PC-3 (cell line): ENCODE measurements at regions of chr3 and their contacts with region 1.

Region 1: DNA sequence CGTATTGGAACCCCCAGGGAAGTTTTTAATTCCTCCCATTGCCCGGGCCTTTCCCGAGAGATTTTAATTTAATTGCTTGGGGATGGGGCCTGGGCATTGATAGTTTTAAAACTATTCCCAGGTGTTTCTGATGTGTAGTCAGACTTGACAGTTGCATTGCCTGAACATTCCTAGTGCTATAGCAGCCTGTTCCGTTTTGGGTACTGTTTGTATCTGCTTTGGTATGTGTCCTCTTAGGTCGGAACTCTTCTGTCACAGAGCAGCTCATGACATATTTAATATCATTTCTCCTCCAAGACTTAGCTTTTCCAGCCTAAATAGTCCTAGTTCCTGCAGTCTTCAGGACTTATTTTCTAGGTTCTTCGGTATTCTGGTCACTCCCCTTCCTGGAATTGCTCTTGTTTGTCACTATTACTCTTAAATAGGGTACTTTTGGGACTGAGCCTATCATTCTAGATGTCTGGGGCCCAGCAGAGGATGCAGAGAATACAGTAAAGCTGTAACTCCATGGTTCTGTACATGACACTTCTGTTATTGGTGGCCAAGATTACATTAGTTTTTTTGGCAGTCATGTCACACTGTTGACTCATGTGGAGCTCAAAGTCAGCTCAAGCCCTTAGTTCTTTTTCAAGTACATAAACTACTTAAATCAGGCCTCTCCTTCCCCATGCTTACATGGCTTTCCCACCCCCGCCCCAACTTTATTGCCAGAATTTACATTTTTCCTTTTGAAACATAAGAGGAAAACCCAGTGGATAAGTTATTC is 81.5 kb downstream of the BBX start:
- DNase-seq: no peak
- ATAC-seq: peak; percentile 70
- H3K4me3 ChIP-seq: no peak overlapping the region
- H3K27ac ChIP-seq: no peak overlapping the region
- H3K4me1 ChIP-seq: peaks cover 7% of the 10 kb centered on the region
- H3K27me3 ChIP-seq: no peaks in the 10 kb centered on the region
- CTCF ChIP-seq: no peak

Region 2: GRCh38 chr3:107382631-107383030 is 221.6 kb before region 1 on chr3:
- CTCF ChIA-PET with region 1: no interaction called
- POLR2A ChIA-PET with region 1: no interaction called
- intact Hi-C with region 1: no loop called
- DNase-seq: no peak
- ATAC-seq: no peak
- H3K4me3 ChIP-seq: no peak overlapping the region
- H3K27ac ChIP-seq: no peak overlapping the region
- H3K4me1 ChIP-seq: no peaks in the 10 kb centered on the region
- H3K27me3 ChIP-seq: no peaks in the 10 kb centered on the region
- CTCF ChIP-seq: no peak

Region 3: DNA sequence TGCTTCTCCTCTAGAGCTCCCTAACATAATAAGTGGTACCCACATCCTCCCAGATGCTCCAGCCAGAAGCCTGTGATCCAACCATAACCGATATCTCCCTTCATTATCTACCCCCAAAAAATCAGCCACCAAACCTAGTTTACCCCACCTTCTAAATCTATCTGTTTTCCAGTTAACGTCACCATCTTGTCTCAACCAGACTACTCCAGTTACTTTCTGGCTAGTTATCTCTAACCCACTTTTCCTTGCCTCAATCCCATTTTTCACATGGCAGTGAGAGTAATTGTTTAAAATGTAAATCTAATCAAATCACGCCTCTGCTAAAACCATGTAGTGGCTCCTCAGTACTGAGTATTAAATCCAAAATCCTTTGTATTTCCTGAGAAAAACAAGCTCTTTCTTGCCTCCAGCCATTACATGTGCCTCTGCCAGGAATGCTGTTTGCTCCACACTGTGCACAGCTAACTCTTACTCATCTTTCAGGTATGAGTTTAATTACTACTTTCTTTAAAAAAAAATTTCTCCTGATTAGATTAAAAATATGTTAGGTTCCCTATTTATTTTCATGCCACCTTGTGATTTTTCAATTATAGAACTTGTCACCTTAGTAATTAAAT is 211.6 kb before region 1 on chr3:
- CTCF ChIA-PET with region 1: no interaction called
- POLR2A ChIA-PET with region 1: no interaction called
- intact Hi-C with region 1: no loop called
- DNase-seq: peak; percentile 71
- ATAC-seq: peak; percentile 98
- H3K4me3 ChIP-seq: no peak overlapping the region
- H3K27ac ChIP-seq: no peak overlapping the region
- H3K4me1 ChIP-seq: peaks cover 12% of the 10 kb centered on the region
- H3K27me3 ChIP-seq: no peaks in the 10 kb centered on the region
- CTCF ChIP-seq: no peak

Region 4: GRCh38 chr3:107704477-107704876 is 100.2 kb after region 1 on chr3:
- CTCF ChIA-PET with region 1: no interaction called
- POLR2A ChIA-PET with region 1: interaction called, 23 read pairs
- intact Hi-C with region 1: no loop called
- DNase-seq: no peak
- ATAC-seq: no peak
- H3K4me3 ChIP-seq: no peak overlapping the region
- H3K27ac ChIP-seq: no peak overlapping the region
- H3K4me1 ChIP-seq: no peaks in the 10 kb centered on the region
- H3K27me3 ChIP-seq: no peaks in the 10 kb centered on the region
- CTCF ChIP-seq: no peak